ENCODE measurements at regions of chr14 and their contacts with region 1.

Region 1: DNA sequence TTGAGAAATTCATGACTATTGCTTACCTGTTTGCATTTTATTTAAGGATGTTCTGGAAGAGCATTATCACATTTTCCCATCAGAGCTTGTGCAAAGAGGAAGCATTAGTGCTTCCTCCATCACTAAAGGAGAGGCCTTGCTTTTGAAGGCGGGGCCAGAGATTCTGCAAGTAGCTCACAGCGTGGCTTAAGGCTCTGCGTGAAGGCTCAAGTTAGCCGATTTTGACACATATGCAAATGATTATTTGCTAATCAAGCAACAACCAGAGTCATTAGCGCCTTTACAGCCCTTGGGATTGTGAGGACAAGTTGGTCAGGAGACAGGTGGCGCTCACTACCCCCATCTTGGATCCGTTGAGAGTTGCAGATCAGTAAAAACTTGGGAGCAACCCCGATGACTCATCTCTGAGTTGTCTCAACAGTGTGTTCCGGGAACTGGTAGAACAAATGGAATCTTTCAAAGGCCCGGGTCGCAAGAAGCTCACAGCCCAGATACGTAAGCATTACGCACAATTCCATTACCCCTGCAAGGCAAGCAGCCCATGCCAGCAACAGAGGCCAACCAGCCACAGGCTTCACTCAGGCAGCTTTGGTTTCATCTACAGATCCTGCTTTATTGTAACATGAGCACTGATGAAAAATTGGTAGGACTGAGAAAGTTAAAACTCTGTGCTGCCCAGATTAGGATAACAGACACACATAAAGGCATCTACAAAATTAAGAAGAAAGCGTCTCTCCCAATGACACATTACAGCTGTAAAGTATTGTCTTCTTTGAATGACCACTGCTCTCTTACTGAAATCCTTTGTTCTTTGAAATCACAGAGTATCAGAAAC is 34.9 kb upstream of the SPTSSA start:
- DNase-seq: peak; percentile 96
- H3K4me3 ChIP-seq: peak overlapping the region in 2 of 4 donors; percentile 10 to 27
- H3K27ac ChIP-seq: peak overlapping the region; percentile 78 to 89 (median 84)
- H3K4me1 ChIP-seq: peaks cover 4 to 24% (median 21%) of the 10 kb centered on the region in 4 donors
- H3K27me3 ChIP-seq: no peaks in the 10 kb centered on the region
- CTCF ChIP-seq: peak; percentile 6 to 37 (median 34)
- EP300 ChIP-seq: peak; percentile 76
- POLR2A ChIP-seq: no peak

Region 2: GRCh38 chr14:33777681-33778080 is 719.2 kb before region 1 on chr14:
- intact Hi-C with region 1: no loop called
- DNase-seq: no peak
- H3K4me3 ChIP-seq: no peak overlapping the region
- H3K27ac ChIP-seq: no peak overlapping the region
- H3K4me1 ChIP-seq: peaks cover 0 to 17% (median 4%) of the 10 kb centered on the region in 4 donors
- H3K27me3 ChIP-seq: no peaks in the 10 kb centered on the region
- CTCF ChIP-seq: no peak
- EP300 ChIP-seq: no peak
- POLR2A ChIP-seq: no peak

Region 3: GRCh38 chr14:34365309-34365915 is 131.5 kb before region 1 on chr14:
- intact Hi-C with region 1: loop called (anchors 10 kb)
- DNase-seq: peak; percentile 74
- H3K4me3 ChIP-seq: no peak overlapping the region
- H3K27ac ChIP-seq: no peak overlapping the region
- H3K4me1 ChIP-seq: peaks cover 0 to 32% (median 7%) of the 10 kb centered on the region in 4 donors
- H3K27me3 ChIP-seq: no peaks in the 10 kb centered on the region
- CTCF ChIP-seq: peak in 1 of 3 experiments; percentile 14
- EP300 ChIP-seq: no peak
- POLR2A ChIP-seq: no peak

Region 4: GRCh38 chr14:34554540-34555333 is 57.8 kb after region 1 on chr14:
- intact Hi-C with region 1: no loop called
- DNase-seq: no peak
- H3K4me3 ChIP-seq: no peak overlapping the region
- H3K27ac ChIP-seq: peak overlapping the region; percentile 54 to 76 (median 68)
- H3K4me1 ChIP-seq: peaks cover 0 to 11% (median 10%) of the 10 kb centered on the region in 4 donors
- H3K27me3 ChIP-seq: no peaks in the 10 kb centered on the region
- CTCF ChIP-seq: no peak
- EP300 ChIP-seq: no peak
- POLR2A ChIP-seq: no peak